ENCODE measurements at regions of chr10 and their contacts with region 1.

Region 1: GRCh38 chr10:73495884-73496674 is at the start of gene PPP3CB:
- DNase-seq: peak in 1 of 2 experiments; percentile 89
- H3K4me3 ChIP-seq: peak within 1 kb of the TSS; percentile 87
- H3K27ac ChIP-seq: peak within 1 kb of the TSS; percentile 77
- H3K4me1 ChIP-seq: peaks cover 32% of the 10 kb centered on the region
- H3K27me3 ChIP-seq: no peaks in the 10 kb centered on the region
- CTCF ChIP-seq: no peak
- total RNA-seq, gene PPP3CB: 28.8 and 34.0 TPM in 2 replicates

Region 2: GRCh38 chr10:72483471-72483870 is 1012.6 kb before region 1 on chr10:
- CTCF ChIA-PET with region 1: interaction called, 13 read pairs
- POLR2A ChIA-PET with region 1: no interaction called
- intact Hi-C with region 1: no loop called
- DNase-seq: no peak
- H3K4me3 ChIP-seq: no peak overlapping the region
- H3K27ac ChIP-seq: no peak overlapping the region
- H3K4me1 ChIP-seq: no peaks in the 10 kb centered on the region
- H3K27me3 ChIP-seq: no peaks in the 10 kb centered on the region
- CTCF ChIP-seq: no peak

Region 3: DNA sequence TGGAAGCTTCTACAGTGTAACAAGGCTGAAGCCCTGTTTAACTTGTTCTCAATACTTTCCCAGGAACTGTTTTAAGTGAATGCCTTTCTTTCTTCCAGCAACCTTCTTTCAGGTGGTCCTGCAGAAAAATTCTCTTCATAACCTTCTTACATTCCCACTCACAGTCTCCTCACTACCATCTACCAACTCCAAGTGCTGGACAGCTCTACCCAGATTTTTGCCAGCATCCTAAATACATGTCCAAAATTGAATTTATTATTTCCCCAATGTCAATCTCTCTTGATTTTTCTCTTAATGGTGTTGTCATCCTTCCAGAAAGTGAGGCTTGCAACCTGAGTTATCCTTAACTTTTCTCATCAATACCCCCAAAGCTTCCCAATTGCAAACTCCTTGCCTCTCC is 185.6 kb before region 1 on chr10:
- CTCF ChIA-PET with region 1: no interaction called
- POLR2A ChIA-PET with region 1: interaction called, 11 read pairs
- intact Hi-C with region 1: no loop called
- DNase-seq: no peak
- H3K4me3 ChIP-seq: no peak overlapping the region
- H3K27ac ChIP-seq: no peak overlapping the region
- H3K4me1 ChIP-seq: no peaks in the 10 kb centered on the region
- H3K27me3 ChIP-seq: no peaks in the 10 kb centered on the region
- CTCF ChIP-seq: no peak

Region 4: GRCh38 chr10:73413528-73414229 is 82.4 kb before region 1 on chr10 and contains the start of gene ANXA7:
- CTCF ChIA-PET with region 1: no interaction called
- POLR2A ChIA-PET with region 1: interaction called, 8 read pairs
- intact Hi-C with region 1: loop called (anchors 1 kb)
- DNase-seq: peak; percentile 85 to 95
- H3K4me3 ChIP-seq: peak within 1 kb of the TSS; percentile 84
- H3K27ac ChIP-seq: peak within 1 kb of the TSS; percentile 89
- H3K4me1 ChIP-seq: peaks cover 43% of the 10 kb centered on the region
- H3K27me3 ChIP-seq: no peaks in the 10 kb centered on the region
- CTCF ChIP-seq: no peak; the same call in 1 of the 2 replicates
- total RNA-seq, gene ANXA7: 149 and 154 TPM in 2 replicates

Region 5: DNA sequence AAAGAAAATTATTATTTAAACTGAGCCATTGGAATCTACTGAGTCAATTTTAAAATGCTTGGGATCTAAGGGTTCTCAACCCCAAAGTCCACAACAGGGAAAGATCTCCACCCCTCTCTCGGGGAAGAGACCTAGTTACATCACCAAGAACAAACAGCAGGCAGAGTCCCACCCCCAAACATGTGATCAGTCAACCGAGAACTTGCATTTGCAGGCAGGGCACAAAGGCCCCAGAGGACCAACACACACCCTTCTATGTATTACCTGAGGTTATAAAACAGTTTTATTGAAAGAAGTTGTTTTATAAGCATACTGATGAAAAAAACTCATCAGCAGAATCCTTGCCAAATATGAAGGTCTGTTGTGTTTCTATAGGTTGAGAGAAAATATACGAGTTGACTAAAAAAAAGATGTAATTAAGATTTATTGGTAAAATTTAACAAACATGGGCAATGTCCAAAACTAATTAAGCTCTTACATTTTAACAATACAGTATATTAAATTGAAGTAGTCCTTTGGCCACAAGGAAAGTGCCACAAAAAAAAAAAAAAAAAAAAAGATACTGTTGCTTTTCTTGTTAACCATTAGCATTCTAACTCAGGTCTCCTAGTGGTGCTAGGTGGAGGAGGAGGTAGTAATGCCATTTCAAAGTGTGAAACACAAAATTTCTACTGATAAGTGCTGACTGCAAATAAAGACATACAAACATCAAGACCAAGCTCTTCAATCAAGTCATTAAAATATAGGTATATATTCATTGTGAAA is 96.0 kb after region 1 on chr10:
- CTCF ChIA-PET with region 1: no interaction called
- POLR2A ChIA-PET with region 1: interaction called, 18 read pairs
- intact Hi-C with region 1: no loop called
- DNase-seq: peak; percentile 30 to 57
- H3K4me3 ChIP-seq: peak overlapping the region; percentile 28; the same call in 1 of the 2 replicates
- H3K27ac ChIP-seq: peak overlapping the region; percentile 84
- H3K4me1 ChIP-seq: peaks cover 60% of the 10 kb centered on the region
- H3K27me3 ChIP-seq: no peaks in the 10 kb centered on the region
- CTCF ChIP-seq: no peak

Region 6: DNA sequence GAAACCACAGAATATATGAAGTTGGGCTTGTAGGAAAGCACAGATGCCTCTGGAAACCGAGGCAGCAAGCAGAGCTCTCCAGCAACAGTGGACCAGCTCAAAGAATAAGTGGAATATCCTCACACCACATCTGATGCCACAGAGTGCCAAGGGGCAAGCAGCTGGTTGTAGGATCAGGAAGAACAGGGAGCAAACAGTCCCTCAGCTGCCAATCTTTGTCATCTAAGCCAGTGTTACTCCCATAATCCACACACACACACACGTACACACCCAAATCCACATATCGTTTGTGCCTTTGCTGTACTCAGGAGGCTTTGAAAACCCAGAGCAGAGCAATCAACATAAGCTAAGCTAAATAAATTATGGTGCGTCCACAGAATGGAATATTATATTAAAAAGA is 227.4 kb after region 1 on chr10:
- CTCF ChIA-PET with region 1: interaction called, 10 read pairs
- POLR2A ChIA-PET with region 1: no interaction called
- intact Hi-C with region 1: no loop called
- DNase-seq: no peak
- H3K4me3 ChIP-seq: no peak overlapping the region
- H3K27ac ChIP-seq: no peak overlapping the region
- H3K4me1 ChIP-seq: peaks cover under 1% of the 10 kb centered on the region; the same call in 1 of the 2 replicates
- H3K27me3 ChIP-seq: no peaks in the 10 kb centered on the region
- CTCF ChIP-seq: no peak